Natural killer cell (primary cell): ENCODE measurements at regions of chr18 and their contacts with region 1.

Region 1: DNA sequence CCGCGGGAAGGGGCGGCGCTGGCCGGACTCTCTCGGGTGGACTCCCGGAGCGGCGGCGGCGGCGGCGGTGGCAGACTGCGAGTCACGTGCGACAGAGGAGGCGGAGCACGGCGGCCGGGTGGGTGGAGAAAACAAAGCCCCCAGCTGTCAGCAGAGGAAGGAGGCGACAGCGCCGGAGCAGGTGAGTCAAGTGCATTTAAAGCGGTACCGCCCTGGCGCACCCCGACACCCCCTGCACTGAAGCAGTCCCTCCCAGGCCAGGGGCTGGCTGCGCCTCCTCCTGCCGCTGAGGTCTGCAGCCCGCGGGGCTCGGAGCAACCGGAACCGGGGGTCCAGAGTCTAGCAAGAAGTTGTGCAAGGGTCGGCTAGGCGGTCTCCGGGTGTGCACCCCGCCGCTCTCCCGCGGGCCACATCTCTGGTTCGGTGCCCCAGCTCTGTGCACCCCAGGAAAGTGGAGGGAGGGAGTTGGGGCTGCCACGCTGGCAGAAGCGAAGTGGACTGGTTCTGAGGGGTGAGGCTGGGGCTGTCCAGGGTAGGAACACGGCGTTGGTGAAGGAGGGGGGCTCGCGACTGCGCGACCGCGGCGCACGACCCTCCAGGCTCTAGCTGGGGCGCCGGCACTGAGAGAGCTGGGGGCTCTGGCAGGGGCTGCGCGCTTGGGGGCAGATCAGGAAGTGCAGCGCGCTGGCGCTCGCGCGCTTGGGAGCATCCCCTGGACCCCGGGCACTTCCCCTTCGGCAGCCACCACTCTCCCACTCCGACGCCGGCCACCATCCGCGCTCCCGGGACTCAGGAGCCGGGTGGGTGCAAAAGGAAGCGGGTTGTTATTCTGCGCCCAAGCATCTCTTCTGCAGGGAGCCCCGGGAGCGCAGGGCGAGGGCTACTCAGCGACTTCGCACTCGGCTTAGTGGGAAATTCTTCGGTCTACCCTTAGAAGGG is 64.0 kb upstream of the MAPRE2 start:
- DNase-seq: peak; percentile 82 to 85
- ATAC-seq: peak; percentile 71 to 85 (median 82)
- H3K4me3 ChIP-seq: peak overlapping the region; percentile 100
- H3K4me3 Mint-ChIP-seq: peak overlapping the region; percentile 95
- H3K27ac ChIP-seq: peak overlapping the region; percentile 30
- H3K27ac Mint-ChIP-seq: peak overlapping the region; percentile 87 to 90
- H3K4me1 ChIP-seq: peaks cover 27% of the 10 kb centered on the region
- H3K4me1 Mint-ChIP-seq: peaks cover 27 to 36% of the 10 kb centered on the region in 2 donors
- H3K27me3 ChIP-seq: no peaks in the 10 kb centered on the region
- H3K27me3 Mint-ChIP-seq: peaks cover 7 to 16% of the 10 kb centered on the region in 2 donors
- CTCF ChIP-seq: no peak

Region 2: GRCh38 chr18:33538418-33539042 is 1438.6 kb before region 1 on chr18:
- intact Hi-C with region 1: no loop called
- DNase-seq: no peak
- ATAC-seq: no peak
- H3K4me3 ChIP-seq: no peak overlapping the region
- H3K4me3 Mint-ChIP-seq: no peak overlapping the region
- H3K27ac ChIP-seq: no peak overlapping the region
- H3K27ac Mint-ChIP-seq: no peak overlapping the region
- H3K4me1 ChIP-seq: no peaks in the 10 kb centered on the region
- H3K4me1 Mint-ChIP-seq: no peaks in the 10 kb centered on the region
- H3K27me3 ChIP-seq: no peaks in the 10 kb centered on the region
- H3K27me3 Mint-ChIP-seq: no peaks in the 10 kb centered on the region
- CTCF ChIP-seq: no peak

Region 3: GRCh38 chr18:34857320-34857719 is 119.8 kb before region 1 on chr18:
- intact Hi-C with region 1: loop called (anchors 1 kb)
- DNase-seq: no peak
- ATAC-seq: no peak
- H3K4me3 ChIP-seq: no peak overlapping the region
- H3K4me3 Mint-ChIP-seq: no peak overlapping the region
- H3K27ac ChIP-seq: no peak overlapping the region
- H3K27ac Mint-ChIP-seq: no peak overlapping the region
- H3K4me1 ChIP-seq: peaks cover 11% of the 10 kb centered on the region
- H3K4me1 Mint-ChIP-seq: peaks cover 7 to 8% of the 10 kb centered on the region in 2 donors
- H3K27me3 ChIP-seq: no peaks in the 10 kb centered on the region
- H3K27me3 Mint-ChIP-seq: peaks cover 7 to 8% of the 10 kb centered on the region in 2 donors
- CTCF ChIP-seq: no peak